ENCODE measurements at regions of chr3 and their contacts with region 1.

Region 1: DNA sequence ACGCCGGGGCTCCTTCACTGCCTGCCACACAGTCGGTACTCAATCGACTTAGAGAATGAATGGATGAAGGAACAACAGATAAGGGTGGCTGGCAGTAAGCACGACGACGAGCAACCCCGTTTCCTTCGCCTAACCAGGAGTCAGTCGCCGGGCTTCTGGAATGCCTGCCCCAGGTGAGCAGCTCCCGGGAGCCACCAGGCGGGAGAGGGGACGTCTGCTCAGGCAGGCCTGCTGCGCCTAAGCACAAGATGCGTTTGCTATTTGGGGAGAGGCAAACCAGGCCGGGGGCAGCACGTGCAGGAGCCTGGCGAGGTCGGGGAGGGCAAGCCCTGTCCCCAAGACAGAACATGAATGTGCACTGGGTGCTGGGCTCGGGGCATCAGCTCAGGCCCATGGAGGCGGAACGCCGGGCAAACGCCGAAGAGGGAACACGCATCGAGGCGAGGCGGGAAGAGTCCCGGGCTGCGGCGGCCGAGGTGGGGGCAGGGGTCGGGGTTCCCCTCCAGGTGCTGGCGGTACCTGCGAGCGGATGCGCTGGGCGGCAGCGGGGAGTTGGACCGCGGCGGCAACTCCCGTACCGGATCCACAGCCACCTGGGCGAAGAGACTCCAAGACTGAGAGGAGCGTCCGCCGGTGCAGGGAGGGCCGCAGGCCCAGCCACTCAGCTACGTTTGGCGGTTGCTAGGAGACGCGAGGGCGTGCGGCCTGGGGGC is at the start of gene CFAP92:
- DNase-seq: peak; percentile 84 to 94 (median 92)
- ATAC-seq: peak; percentile 97
- H3K4me3 ChIP-seq: peak within 1 kb of the TSS; percentile 39
- H3K4me3 Mint-ChIP-seq: peak within 1 kb of the TSS; percentile 81
- H3K27ac ChIP-seq: peak within 1 kb of the TSS in 1 of 2 experiments; percentile 22
- H3K27ac Mint-ChIP-seq: peak within 1 kb of the TSS; percentile 39
- H3K4me1 ChIP-seq: peaks cover 31% of the 10 kb centered on the region
- H3K4me1 Mint-ChIP-seq: peaks cover 30% of the 10 kb centered on the region
- H3K27me3 ChIP-seq: no peaks in the 10 kb centered on the region
- H3K27me3 Mint-ChIP-seq: no peaks in the 10 kb centered on the region
- CTCF ChIP-seq: no peak
- total RNA-seq, gene CFAP92: 0.60 to 0.75 TPM

Region 2: GRCh38 chr3:129003578-129004160 is 10.1 kb after region 1 on chr3:
- CTCF ChIA-PET with region 1: interaction called, 23 read pairs
- POLR2A ChIA-PET with region 1: interaction called, 3 read pairs
- intact Hi-C with region 1: no loop called
- DNase-seq: peak in 8 of 9 experiments; percentile 38 to 82 (median 60)
- ATAC-seq: peak; percentile 92
- H3K4me3 ChIP-seq: peak overlapping the region in 1 of 2 experiments; percentile 12
- H3K4me3 Mint-ChIP-seq: peak overlapping the region; percentile 70
- H3K27ac ChIP-seq: no peak overlapping the region
- H3K27ac Mint-ChIP-seq: no peak overlapping the region
- H3K4me1 ChIP-seq: peaks cover 43% of the 10 kb centered on the region
- H3K4me1 Mint-ChIP-seq: peaks cover 43% of the 10 kb centered on the region
- H3K27me3 ChIP-seq: peaks cover 5 to 23% of the 10 kb centered on the region in 2 experiments
- H3K27me3 Mint-ChIP-seq: peaks cover 21% of the 10 kb centered on the region
- CTCF ChIP-seq: peak; percentile 34

Region 3: GRCh38 chr3:129016356-129016719 is 22.7 kb after region 1 on chr3:
- CTCF ChIA-PET with region 1: interaction called, 22 read pairs
- POLR2A ChIA-PET with region 1: interaction called, 33 read pairs
- intact Hi-C with region 1: no loop called
- DNase-seq: peak in 8 of 9 experiments; percentile 48 to 91 (median 74)
- ATAC-seq: peak; percentile 86
- H3K4me3 ChIP-seq: peak overlapping the region; percentile 40 to 41
- H3K4me3 Mint-ChIP-seq: peak overlapping the region; percentile 73
- H3K27ac ChIP-seq: peak overlapping the region; percentile 49 to 87
- H3K27ac Mint-ChIP-seq: peak overlapping the region; percentile 92
- H3K4me1 ChIP-seq: peaks cover 41% of the 10 kb centered on the region
- H3K4me1 Mint-ChIP-seq: peaks cover 44% of the 10 kb centered on the region
- H3K27me3 ChIP-seq: no peaks in the 10 kb centered on the region
- H3K27me3 Mint-ChIP-seq: no peaks in the 10 kb centered on the region
- CTCF ChIP-seq: peak; percentile 38

Region 4: DNA sequence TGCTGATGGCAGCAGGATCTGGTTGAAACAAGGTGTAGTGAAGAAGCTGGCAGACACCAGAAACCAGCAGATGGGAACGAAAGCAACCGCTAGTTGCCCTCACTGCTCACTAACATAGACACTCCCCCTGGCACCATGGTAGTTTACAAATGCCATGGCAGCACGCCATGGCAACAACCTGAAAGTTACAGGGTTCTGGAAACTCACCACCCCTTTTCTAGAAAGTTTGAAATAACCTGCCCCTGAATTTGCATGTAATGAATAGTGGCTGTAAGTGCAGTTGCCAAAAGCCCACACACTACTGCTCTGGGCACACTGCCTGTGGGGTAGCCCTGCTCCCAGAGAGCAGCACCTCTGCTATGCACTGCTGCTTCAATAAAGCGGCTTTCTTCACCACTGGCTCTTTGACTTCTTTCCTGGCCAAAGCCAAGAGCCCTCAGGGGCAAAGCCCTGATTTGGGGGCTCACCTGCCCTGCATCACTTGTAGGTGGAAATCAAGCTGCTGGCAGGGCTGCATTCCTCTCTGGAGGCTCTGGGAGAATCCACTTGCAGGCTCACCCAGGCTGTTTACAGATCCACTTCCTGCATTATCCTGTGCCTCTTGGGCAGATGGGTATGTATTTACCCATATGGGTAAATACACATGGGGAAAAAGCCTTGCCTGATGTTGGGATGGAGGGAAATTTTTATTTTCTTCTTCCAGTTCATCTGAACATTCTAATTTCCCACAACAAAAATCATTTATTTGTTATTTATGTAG is 65.0 kb after region 1 on chr3:
- CTCF ChIA-PET with region 1: interaction called, 10 read pairs
- POLR2A ChIA-PET with region 1: no interaction called
- intact Hi-C with region 1: no loop called
- DNase-seq: peak in 3 of 9 experiments; percentile 29 to 59 (median 38)
- ATAC-seq: peak; percentile 68
- H3K4me3 ChIP-seq: no peak overlapping the region
- H3K4me3 Mint-ChIP-seq: no peak overlapping the region
- H3K27ac ChIP-seq: no peak overlapping the region
- H3K27ac Mint-ChIP-seq: no peak overlapping the region
- H3K4me1 ChIP-seq: peaks cover 3% of the 10 kb centered on the region
- H3K4me1 Mint-ChIP-seq: peaks cover 9% of the 10 kb centered on the region
- H3K27me3 ChIP-seq: no peaks in the 10 kb centered on the region
- H3K27me3 Mint-ChIP-seq: no peaks in the 10 kb centered on the region
- CTCF ChIP-seq: no peak

Region 5: GRCh38 chr3:129160891-129161859 is 167.6 kb after region 1 on chr3 and contains the start of gene ISY1:
- CTCF ChIA-PET with region 1: no interaction called
- POLR2A ChIA-PET with region 1: no interaction called
- intact Hi-C with region 1: loop called in 1 of 2 experiments (anchors 1 kb)
- DNase-seq: peak; percentile 71 to 97 (median 86)
- ATAC-seq: peak; percentile 80
- H3K4me3 ChIP-seq: peak within 1 kb of the TSS; percentile 84 to 94
- H3K4me3 Mint-ChIP-seq: peak within 1 kb of the TSS; percentile 95
- H3K27ac ChIP-seq: peak within 1 kb of the TSS; percentile 92 to 99
- H3K27ac Mint-ChIP-seq: peak within 1 kb of the TSS; percentile 96
- H3K4me1 ChIP-seq: peaks cover 18% of the 10 kb centered on the region
- H3K4me1 Mint-ChIP-seq: peaks cover 43% of the 10 kb centered on the region
- H3K27me3 ChIP-seq: no peaks in the 10 kb centered on the region
- H3K27me3 Mint-ChIP-seq: no peaks in the 10 kb centered on the region
- CTCF ChIP-seq: peak; percentile 70
- total RNA-seq, gene ISY1: 35.2 to 38.7 TPM

Region 6: DNA sequence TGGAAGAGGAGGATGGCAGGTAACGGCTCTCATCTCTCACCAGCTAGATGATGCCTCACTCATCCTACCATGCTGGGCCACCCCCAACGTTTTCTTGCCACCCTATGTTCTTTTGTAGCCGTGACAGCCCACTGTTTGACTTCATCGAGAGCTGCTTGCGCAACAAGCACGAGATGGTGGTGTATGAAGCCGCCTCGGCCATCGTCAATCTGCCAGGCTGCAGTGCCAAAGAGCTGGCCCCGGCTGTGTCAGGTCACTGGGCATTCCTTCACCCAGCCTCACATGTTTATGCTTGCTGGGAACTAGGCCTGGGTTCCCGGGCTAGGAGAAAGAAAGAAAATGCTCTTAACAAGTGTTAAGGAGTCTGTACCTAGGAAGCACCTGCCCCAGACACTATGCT is 264.0 kb after region 1 on chr3:
- CTCF ChIA-PET with region 1: no interaction called
- POLR2A ChIA-PET with region 1: no interaction called
- intact Hi-C with region 1: no loop called
- DNase-seq: no peak
- ATAC-seq: no peak
- H3K4me3 ChIP-seq: no peak overlapping the region
- H3K4me3 Mint-ChIP-seq: no peak overlapping the region
- H3K27ac ChIP-seq: no peak overlapping the region
- H3K27ac Mint-ChIP-seq: no peak overlapping the region
- H3K4me1 ChIP-seq: no peaks in the 10 kb centered on the region
- H3K4me1 Mint-ChIP-seq: peaks cover 11% of the 10 kb centered on the region
- H3K27me3 ChIP-seq: no peaks in the 10 kb centered on the region
- H3K27me3 Mint-ChIP-seq: no peaks in the 10 kb centered on the region
- CTCF ChIP-seq: no peak